Activated CD8-positive, alpha-beta memory T cell treated with anti-CD3 and anti-CD28 coated beads, Interleukin-2, amount 10 ng/mL, durations not matched to agents 7 days and 5 days (primary cell): ENCODE measurements at regions of chr9 and their contacts with region 1.

Region 1: GRCh38 chr9:113511856-113512761 is 48.6 kb downstream of the RGS3 start:
- DNase-seq: peak; percentile 93
- ATAC-seq: peak; percentile 74
- H3K4me3 Mint-ChIP-seq: peak overlapping the region; percentile 42
- H3K27ac Mint-ChIP-seq: peak overlapping the region; percentile 87
- H3K4me1 Mint-ChIP-seq: peaks cover 57% of the 10 kb centered on the region
- H3K27me3 Mint-ChIP-seq: no peaks in the 10 kb centered on the region

Region 2: GRCh38 chr9:113331780-113332179 is 180.3 kb before region 1 on chr9:
- CTCF ChIA-PET with region 1: no interaction called
- DNase-seq: no peak
- ATAC-seq: no peak
- H3K4me3 Mint-ChIP-seq: no peak overlapping the region
- H3K27ac Mint-ChIP-seq: no peak overlapping the region
- H3K4me1 Mint-ChIP-seq: peaks cover 11% of the 10 kb centered on the region
- H3K27me3 Mint-ChIP-seq: no peaks in the 10 kb centered on the region

Region 3: GRCh38 chr9:113523421-113524236 is 11.5 kb after region 1 on chr9:
- CTCF ChIA-PET with region 1: interaction called, 15 read pairs
- DNase-seq: peak; percentile 74
- ATAC-seq: peak; percentile 47
- H3K4me3 Mint-ChIP-seq: peak overlapping the region; percentile 38
- H3K27ac Mint-ChIP-seq: peak overlapping the region; percentile 65
- H3K4me1 Mint-ChIP-seq: peaks cover 66% of the 10 kb centered on the region
- H3K27me3 Mint-ChIP-seq: no peaks in the 10 kb centered on the region